HepG2 (cell line): ENCODE measurements at regions of chr7 and their contacts with region 1.

Region 1: DNA sequence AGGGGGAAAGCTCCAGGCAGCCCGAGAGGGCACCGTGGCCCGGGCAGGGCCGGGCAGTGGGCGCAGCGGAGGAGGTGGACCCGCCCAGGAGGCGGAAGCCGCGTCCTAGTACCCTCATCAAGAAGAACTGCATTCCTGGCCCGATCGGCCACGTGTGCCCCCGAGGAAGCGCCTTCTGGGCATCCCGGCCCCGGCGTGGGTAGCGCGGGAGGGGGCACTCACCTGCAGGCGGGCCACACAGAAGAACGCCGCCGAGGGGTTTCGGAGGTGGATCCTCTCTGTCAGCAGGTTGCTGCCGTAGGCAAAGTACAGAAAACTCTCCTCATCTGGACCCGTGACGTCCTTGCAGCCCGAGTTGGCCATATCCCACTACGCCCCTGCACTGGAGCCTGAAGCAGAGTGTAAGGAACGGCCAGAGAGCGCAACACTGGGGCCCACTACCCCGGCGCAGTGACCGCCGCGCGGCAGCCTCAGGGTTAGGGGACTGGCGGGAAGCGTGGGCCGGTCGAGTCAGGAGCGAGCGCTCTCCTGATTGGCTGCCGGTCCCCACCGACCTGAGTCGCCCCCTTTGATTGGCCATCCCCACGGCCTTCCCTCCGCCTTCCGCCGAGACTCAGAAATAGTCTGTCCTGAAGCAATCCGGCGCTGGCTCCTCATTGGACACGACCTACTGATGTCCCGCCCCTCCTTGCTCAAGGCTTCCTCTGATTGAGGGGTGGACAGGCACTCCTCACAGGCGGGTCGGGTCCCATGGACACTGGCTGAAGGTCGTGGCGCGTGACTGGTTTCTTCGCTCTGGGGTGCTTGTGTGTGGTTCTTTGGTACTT is at the start of gene GGCT:
- DNase-seq: peak; percentile 97
- ATAC-seq: peak; percentile 98
- H3K4me3 ChIP-seq: peak within 1 kb of the TSS; percentile 68 to 86 (median 82)
- H3K27ac ChIP-seq: peak within 1 kb of the TSS; percentile 74
- H3K4me1 ChIP-seq: peaks cover 41% of the 10 kb centered on the region
- H3K27me3 ChIP-seq: no peaks in the 10 kb centered on the region
- CTCF ChIP-seq: no peak
- EP300 ChIP-seq: no peak
- POLR2A ChIP-seq: peak; percentile 94 to 97
- RAD21 ChIP-seq: peak; percentile 17; the same call in 1 of the 2 replicates
- total RNA-seq, gene GGCT: 78.3 and 100 TPM in 2 replicates

Region 2: DNA sequence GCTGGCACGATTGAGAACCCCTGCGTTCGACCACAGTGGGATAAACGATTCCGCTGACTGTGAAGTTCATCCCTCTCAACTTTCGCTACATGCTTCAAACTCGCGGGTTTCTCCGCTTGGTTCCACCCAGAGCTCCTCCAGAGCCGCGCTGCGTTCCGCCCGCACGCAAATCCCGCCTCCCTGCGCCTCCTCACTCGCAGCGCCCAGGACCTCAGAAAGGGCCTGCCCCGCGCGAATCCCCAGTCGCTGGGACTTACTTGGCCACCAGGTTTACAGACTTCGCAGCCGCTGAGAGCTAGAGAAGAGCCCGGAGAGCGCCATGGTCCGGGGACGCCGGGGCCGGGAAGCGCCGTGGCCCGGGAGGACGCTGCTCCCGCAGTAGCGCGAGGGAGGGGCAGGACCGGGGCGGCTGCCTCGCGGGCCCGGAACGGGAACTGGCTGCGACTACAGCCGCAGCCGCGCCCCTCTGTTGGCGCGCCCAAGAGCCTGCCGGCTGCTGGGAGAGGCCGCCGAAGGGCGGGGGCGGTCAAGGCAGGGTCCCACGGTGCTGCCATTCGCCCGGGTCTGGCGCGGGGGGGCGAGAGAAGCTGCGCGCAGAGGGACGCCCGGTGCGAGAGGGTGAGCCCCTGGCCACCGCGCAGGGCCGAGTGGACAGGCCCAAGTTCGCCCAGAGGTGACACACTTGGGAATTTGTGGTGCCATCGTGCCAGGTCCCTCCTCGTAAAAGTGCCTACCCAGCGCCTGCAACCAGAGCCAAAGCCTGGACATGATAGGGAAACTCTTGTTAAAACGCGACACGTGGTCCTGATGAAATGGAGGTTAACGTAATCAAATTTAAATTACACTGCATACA is 26.0 kb before region 1 on chr7 and contains the start of gene NOD1:
- CTCF ChIA-PET with region 1: no interaction called
- POLR2A ChIA-PET with region 1: no interaction called
- in situ Hi-C with region 1: no loop called
- intact Hi-C with region 1: loop called (anchors 1 kb)
- DNase-seq: peak; percentile 40
- ATAC-seq: peak; percentile 97
- H3K4me3 ChIP-seq: peak within 1 kb of the TSS; percentile 65 to 85 (median 83)
- H3K27ac ChIP-seq: peak within 1 kb of the TSS; percentile 55
- H3K4me1 ChIP-seq: peaks cover 45% of the 10 kb centered on the region
- H3K27me3 ChIP-seq: peaks cover 1 to 14% of the 10 kb centered on the region in 2 experiments; a peak in 2 of 5 replicates
- CTCF ChIP-seq: peak; percentile 40; the same call in 1 of the 2 replicates
- EP300 ChIP-seq: no peak
- POLR2A ChIP-seq: peak; percentile 56 to 57; a peak in 3 of 4 replicates
- RAD21 ChIP-seq: 0 out of 2 replicates have a peak, but pooled peaks have one; percentile 49
- total RNA-seq, gene NOD1: 2.9 TPM in 2 replicates

Region 3: GRCh38 chr7:30771880-30772425 is 267.4 kb after region 1 on chr7:
- CTCF ChIA-PET with region 1: no interaction called
- POLR2A ChIA-PET with region 1: no interaction called
- in situ Hi-C with region 1: no loop called
- intact Hi-C with region 1: no loop called
- DNase-seq: no peak
- ATAC-seq: peak; percentile 57
- H3K4me3 ChIP-seq: peak overlapping the region; percentile 50 to 59 (median 55); a peak in 5 of 6 replicates
- H3K27ac ChIP-seq: no peak overlapping the region
- H3K4me1 ChIP-seq: peaks cover 19% of the 10 kb centered on the region
- H3K27me3 ChIP-seq: peaks cover 0 to 7% of the 10 kb centered on the region in 2 experiments; a peak in 1 of 5 replicates
- CTCF ChIP-seq: no peak
- EP300 ChIP-seq: no peak
- POLR2A ChIP-seq: no peak
- RAD21 ChIP-seq: no peak